PC-9 (cell line): ENCODE measurements at regions of chr6 and their contacts with region 1.

Region 1: DNA sequence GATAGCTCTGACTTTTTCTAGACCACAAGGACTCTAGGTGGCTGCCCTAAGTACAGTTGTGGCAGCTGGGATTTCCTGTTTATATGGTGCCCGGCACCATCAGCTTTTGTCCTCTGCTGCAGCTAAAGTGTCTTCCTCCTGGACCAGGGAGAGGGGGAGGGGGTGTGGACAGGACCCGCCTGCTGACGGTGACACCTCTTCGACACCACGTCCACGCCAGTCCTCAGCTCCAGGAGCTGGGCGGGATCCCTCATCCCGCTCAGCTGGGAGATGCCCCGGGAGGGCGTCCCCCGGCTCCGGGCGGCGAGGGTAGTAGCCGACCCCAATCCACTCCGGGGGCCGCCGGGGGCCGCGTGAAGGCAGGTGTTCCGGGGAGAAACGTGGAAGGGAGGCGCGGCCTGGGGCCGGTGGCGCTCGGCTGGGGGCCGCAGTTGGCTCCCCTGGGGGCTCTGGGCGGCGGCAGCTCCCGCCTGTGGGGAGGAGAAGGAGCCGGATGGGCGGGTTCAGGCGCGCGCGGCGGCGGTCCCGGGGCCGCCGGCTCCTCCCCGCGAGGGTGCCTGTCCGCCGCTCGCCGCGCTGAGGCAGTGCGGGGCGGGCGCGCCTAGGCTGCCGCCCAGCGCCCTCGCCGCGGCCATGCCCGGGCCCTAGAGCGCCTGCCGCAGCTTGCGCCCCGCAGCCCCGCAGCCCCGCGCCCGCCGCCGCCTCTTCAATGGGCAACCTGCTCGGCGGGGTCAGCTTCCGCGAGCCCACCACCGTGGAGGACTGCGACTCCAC is at the start of gene OGFRL1:
- DNase-seq: peak; percentile 72 to 82
- H3K4me3 ChIP-seq: peak within 1 kb of the TSS; percentile 80
- H3K27ac ChIP-seq: no peak within 1 kb of the TSS
- H3K4me1 ChIP-seq: peaks cover 24% of the 10 kb centered on the region
- H3K27me3 ChIP-seq: no peaks in the 10 kb centered on the region
- CTCF ChIP-seq: no peak
- total RNA-seq, gene OGFRL1: 8.1 and 11.0 TPM in 2 replicates

Region 2: DNA sequence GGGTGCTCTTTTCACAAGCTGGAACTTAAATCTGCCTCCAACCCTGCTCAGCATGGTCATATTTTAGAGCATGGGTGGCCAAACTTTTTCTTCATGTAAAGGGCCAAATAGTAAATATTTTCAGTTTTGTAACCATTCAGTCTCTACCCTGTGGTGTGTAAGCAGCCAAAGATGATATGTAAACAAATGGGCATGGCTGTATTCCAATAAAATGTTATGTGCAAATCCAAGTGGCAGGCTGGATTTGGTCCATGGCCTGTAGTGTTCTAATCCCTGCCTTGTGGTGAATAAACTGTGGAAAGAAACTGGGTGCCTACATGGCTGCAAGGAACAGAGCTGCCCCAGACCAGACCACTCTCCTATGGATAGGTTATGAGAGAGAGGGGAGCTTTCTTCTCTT is 32.9 kb after region 1 on chr6:
- CTCF ChIA-PET with region 1: no interaction called
- POLR2A ChIA-PET with region 1: no interaction called
- intact Hi-C with region 1: no loop called
- DNase-seq: no peak
- H3K4me3 ChIP-seq: no peak overlapping the region
- H3K27ac ChIP-seq: no peak overlapping the region
- H3K4me1 ChIP-seq: no peaks in the 10 kb centered on the region
- H3K27me3 ChIP-seq: no peaks in the 10 kb centered on the region
- CTCF ChIP-seq: no peak

Region 3: GRCh38 chr6:71333697-71334096 is 45.3 kb after region 1 on chr6:
- CTCF ChIA-PET with region 1: no interaction called
- POLR2A ChIA-PET with region 1: no interaction called
- intact Hi-C with region 1: loop called (anchors 5 kb)
- DNase-seq: peak; percentile 18 to 68
- H3K4me3 ChIP-seq: no peak overlapping the region
- H3K27ac ChIP-seq: peak overlapping the region; percentile 52
- H3K4me1 ChIP-seq: peaks cover 14% of the 10 kb centered on the region
- H3K27me3 ChIP-seq: no peaks in the 10 kb centered on the region
- CTCF ChIP-seq: no peak